ENCODE measurements at regions of chr17 and their contacts with region 1.

Region 1: GRCh38 chr17:32909787-32910369 is 18.1 kb upstream of the TMEM98 start:
- DNase-seq: peak in 1 of 2 donors; percentile 78
- ATAC-seq: peak; percentile 54 to 86 (median 79)
- H3K4me3 ChIP-seq: no peak overlapping the region
- H3K27ac ChIP-seq: no peak overlapping the region
- H3K4me1 ChIP-seq: peaks cover 0 to 5% (median 0%) of the 10 kb centered on the region in 9 donors
- H3K27me3 ChIP-seq: peaks cover 0 to under 1% (median 0%) of the 10 kb centered on the region in 7 donors
- CTCF ChIP-seq: peak; percentile 47 to 84 (median 76)

Region 2: GRCh38 chr17:32664936-32665583 is 244.8 kb before region 1 on chr17:
- intact Hi-C with region 1: loop called in 1 of 10 experiments (anchors 10 kb)
- DNase-seq: no peak
- ATAC-seq: no peak
- H3K4me3 ChIP-seq: no peak overlapping the region
- H3K27ac ChIP-seq: no peak overlapping the region
- H3K4me1 ChIP-seq: no peaks in the 10 kb centered on the region
- H3K27me3 ChIP-seq: no peaks in the 10 kb centered on the region
- CTCF ChIP-seq: no peak

Region 3: GRCh38 chr17:32854207-32854606 is 55.7 kb before region 1 on chr17:
- intact Hi-C with region 1: no loop called
- DNase-seq: no peak
- ATAC-seq: no peak
- H3K4me3 ChIP-seq: no peak overlapping the region
- H3K27ac ChIP-seq: no peak overlapping the region
- H3K4me1 ChIP-seq: peaks cover 0 to 9% (median 0%) of the 10 kb centered on the region in 9 donors
- H3K27me3 ChIP-seq: no peaks in the 10 kb centered on the region
- CTCF ChIP-seq: no peak

Measured in heart right ventricle (tissue), 16 donors.